ENCODE measurements at regions of chr12 and their contacts with region 1.

Region 1: DNA sequence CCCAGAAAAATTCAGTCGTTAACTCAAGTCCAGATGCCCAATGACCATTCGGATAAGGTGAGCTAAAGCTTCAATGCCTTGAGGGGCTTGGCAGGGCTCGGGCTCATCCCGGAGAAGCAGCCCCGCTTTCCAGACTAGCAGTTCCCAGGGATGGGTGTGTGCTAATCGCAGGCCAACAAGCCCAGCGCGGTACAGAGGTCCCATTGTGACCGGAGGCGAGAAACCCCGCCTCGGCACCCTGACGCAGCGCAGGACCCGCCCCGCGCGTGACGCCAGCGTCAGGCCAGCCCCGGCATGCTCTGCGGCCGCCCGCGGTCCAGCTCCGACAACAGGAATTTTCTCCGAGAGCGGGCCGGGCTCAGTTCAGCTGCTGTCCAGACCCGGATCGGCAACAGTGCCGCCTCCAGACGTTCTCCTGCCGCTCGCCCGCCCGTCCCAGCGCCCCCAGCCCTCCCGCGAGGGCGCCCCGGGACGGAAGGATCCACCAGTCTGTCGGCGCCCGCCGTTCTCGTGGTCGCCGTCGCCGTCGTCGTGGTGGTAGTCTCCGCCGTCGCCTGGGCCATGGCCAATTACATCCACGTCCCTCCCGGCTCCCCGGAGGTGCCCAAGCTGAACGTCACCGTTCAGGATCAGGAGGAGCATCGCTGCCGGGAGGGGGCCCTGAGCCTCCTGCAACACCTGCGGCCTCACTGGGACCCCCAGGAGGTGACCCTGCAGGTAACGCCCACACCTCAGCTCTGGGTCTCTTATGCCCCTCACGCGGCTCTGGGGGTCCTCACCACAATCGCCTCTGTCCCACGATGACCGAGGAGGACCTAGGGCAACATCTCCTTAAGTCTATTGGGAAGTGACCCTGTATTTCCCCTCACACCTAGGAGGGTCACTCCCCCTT is at the start of gene ETNK1:
- DNase-seq: peak; percentile 93
- ATAC-seq: peak; percentile 96
- H3K4me3 Mint-ChIP-seq: peak within 1 kb of the TSS; percentile 94
- H3K27ac Mint-ChIP-seq: peak within 1 kb of the TSS; percentile 99
- H3K4me1 Mint-ChIP-seq: peaks cover 40% of the 10 kb centered on the region
- H3K27me3 Mint-ChIP-seq: no peaks in the 10 kb centered on the region
- CTCF ChIP-seq: no peak
- total RNA-seq, gene ETNK1: 68.8 to 81.3 TPM (median 79.2 TPM) in 3 replicates

Region 2: GRCh38 chr12:22110176-22110575 is 514.9 kb before region 1 on chr12:
- CTCF ChIA-PET with region 1: no interaction called
- POLR2A ChIA-PET with region 1: interaction called, 10 read pairs
- DNase-seq: no peak
- ATAC-seq: no peak
- H3K4me3 Mint-ChIP-seq: no peak overlapping the region
- H3K27ac Mint-ChIP-seq: no peak overlapping the region
- H3K4me1 Mint-ChIP-seq: no peaks in the 10 kb centered on the region
- H3K27me3 Mint-ChIP-seq: no peaks in the 10 kb centered on the region
- CTCF ChIP-seq: no peak

Region 3: DNA sequence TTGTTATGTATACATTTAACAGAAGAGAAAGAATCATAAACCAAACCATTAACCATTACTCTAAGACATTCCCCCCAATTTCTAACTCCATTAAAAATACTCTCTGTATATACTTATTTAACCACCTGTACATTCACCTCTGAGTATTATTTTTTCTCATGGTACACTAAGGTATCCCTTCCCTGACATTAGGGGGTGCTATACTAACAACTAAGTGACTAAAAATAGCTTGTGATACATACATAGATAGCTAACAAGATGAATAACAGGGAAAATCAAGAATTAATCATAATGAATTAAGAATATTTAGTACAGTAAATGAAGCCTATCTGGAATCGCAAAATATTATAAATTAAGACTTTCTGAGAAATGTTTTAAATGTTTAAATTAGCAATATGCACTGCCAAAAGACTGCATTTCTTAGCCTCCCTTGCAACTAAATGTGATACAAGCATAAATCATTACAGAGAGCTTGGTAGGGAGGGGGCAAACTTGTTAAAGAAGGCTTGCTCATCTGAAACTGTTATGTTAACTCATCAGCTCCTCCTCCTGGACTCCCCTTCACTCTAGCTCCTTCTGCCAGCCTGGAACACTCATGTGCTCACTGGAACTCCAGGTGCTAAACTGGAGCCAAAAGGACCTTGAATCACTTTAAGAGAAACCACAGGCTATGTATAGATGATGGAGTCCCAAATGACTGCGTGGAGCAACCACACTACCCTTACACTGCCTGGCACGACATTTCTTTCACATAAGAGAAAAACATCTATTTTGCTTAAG is 95.6 kb before region 1 on chr12:
- CTCF ChIA-PET with region 1: interaction called, 13 read pairs
- POLR2A ChIA-PET with region 1: interaction called, 3 read pairs
- DNase-seq: no peak
- ATAC-seq: peak; percentile 69
- H3K4me3 Mint-ChIP-seq: no peak overlapping the region
- H3K27ac Mint-ChIP-seq: no peak overlapping the region
- H3K4me1 Mint-ChIP-seq: no peaks in the 10 kb centered on the region
- H3K27me3 Mint-ChIP-seq: no peaks in the 10 kb centered on the region
- CTCF ChIP-seq: peak; percentile 32; the same call in 1 of the 2 replicates

Region 4: DNA sequence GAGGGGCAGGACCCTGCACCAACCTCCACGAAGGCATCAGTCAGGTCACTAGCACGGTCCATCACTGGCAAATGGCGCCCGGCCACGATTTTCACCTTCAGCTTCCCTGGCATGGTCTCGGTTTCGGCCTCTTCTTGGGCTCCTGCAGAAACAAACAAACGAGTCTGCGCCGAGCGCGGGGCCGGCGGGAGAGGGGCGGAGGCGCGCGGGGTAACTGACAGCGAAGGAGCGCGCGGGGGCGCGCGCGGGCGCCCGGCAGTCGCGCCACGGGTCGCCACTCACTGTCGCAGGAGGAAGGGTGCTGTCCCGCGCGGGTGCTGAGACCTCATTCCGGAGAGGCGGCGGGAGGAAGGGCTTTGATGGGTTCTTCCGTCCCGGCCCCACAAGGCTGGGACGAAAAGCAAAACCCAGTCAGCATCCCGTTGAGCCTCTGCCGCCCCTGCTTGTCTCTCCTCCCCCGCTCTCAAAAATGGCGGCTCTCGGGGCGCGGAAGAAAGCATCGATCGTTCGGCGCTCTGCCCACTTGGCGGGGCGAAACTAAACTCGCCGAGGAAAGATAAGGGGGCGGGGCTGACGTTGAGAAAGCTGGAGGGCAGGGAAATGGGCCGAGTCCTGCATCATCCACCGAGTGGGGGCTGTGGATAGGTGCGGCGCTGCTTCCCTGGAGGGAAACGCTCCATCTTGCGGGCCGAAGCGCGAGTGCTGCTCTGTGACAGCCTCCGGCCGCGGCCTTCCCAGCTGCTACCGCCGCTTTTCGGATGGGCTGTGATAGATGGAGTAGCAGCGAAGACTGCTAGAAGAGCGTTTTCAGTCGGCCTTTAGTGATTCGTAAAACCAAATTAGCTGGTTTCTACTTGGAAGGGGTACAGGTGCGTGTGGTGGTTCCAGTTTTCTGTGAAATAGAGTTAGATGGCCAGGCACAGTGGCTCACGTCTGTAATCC is 80.8 kb before region 1 on chr12 and contains the start of gene C2CD5:
- CTCF ChIA-PET with region 1: interaction called, 4 read pairs
- POLR2A ChIA-PET with region 1: interaction called, 10 read pairs
- DNase-seq: peak; percentile 97
- ATAC-seq: peak; percentile 96
- H3K4me3 Mint-ChIP-seq: peak within 1 kb of the TSS; percentile 86
- H3K27ac Mint-ChIP-seq: peak within 1 kb of the TSS; percentile 92
- H3K4me1 Mint-ChIP-seq: peaks cover 37% of the 10 kb centered on the region
- H3K27me3 Mint-ChIP-seq: no peaks in the 10 kb centered on the region
- CTCF ChIP-seq: peak; percentile 19; the same call in 1 of the 2 replicates
- total RNA-seq, gene C2CD5: 47.5 to 49.3 TPM (median 48.1 TPM) in 3 replicates

Measured in WTC11 (cell line).